ENCODE measurements at regions of chr12 and their contacts with region 1.

Region 1: GRCh38 chr12:63843721-63844390 is 644 bp upstream of the SRGAP1 start:
- DNase-seq: peak; percentile 87
- ATAC-seq: peak; percentile 93
- H3K4me3 ChIP-seq: peak overlapping the region; percentile 79 to 98 (median 91)
- H3K27ac ChIP-seq: peak overlapping the region; percentile 65
- H3K4me1 ChIP-seq: peaks cover 38% of the 10 kb centered on the region
- H3K27me3 ChIP-seq: no peaks in the 10 kb centered on the region; a peak in 1 of 5 replicates
- CTCF ChIP-seq: peak; percentile 97
- EP300 ChIP-seq: no peak
- POLR2A ChIP-seq: peak in 1 of 2 experiments; percentile 73; a peak in 2 of 4 replicates
- RAD21 ChIP-seq: peak; percentile 100

Region 2: DNA sequence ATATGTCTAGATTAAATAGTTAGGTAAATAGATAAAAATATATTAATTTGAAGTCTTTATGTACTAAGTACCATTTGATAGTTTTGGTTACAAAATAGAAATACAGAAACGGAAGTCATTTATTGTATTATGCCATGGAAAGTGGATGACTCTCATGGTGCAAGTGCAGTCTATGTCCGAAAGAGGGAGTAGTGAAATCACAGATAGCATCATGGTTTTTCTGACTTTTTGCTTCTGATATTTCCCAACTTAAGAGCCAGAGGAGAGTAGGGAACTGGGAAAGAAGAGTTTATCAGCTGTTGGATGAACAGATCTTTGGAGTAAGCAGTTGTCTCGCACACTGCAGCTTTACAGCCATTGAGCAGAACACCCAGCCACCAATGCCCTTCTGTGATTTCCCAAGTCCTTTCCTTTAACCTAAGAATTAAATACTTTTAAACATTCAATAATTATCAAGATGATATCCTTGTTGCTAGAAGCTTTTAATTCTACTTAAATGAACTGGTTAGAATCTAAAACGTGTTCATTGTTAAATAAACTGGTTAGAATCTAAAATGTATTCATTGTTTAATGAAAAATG is 17.8 kb before region 1 on chr12:
- CTCF ChIA-PET with region 1: no interaction called
- POLR2A ChIA-PET with region 1: no interaction called
- in situ Hi-C with region 1: no loop called
- intact Hi-C with region 1: no loop called
- DNase-seq: peak; percentile 56
- ATAC-seq: peak; percentile 79
- H3K4me3 ChIP-seq: no peak overlapping the region
- H3K27ac ChIP-seq: no peak overlapping the region
- H3K4me1 ChIP-seq: peaks cover 18% of the 10 kb centered on the region
- H3K27me3 ChIP-seq: no peaks in the 10 kb centered on the region
- CTCF ChIP-seq: peak; percentile 82
- EP300 ChIP-seq: no peak
- POLR2A ChIP-seq: no peak
- RAD21 ChIP-seq: peak; percentile 57; the same call in 1 of the 2 replicates

Region 3: GRCh38 chr12:63857771-63858670 is 14.2 kb after region 1 on chr12:
- CTCF ChIA-PET with region 1: no interaction called
- POLR2A ChIA-PET with region 1: no interaction called
- in situ Hi-C with region 1: no loop called
- intact Hi-C with region 1: no loop called
- DNase-seq: no peak
- ATAC-seq: no peak
- H3K4me3 ChIP-seq: no peak overlapping the region
- H3K27ac ChIP-seq: no peak overlapping the region
- H3K4me1 ChIP-seq: peaks cover 42% of the 10 kb centered on the region
- H3K27me3 ChIP-seq: no peaks in the 10 kb centered on the region
- CTCF ChIP-seq: no peak
- EP300 ChIP-seq: no peak
- POLR2A ChIP-seq: no peak
- RAD21 ChIP-seq: no peak

Region 4: DNA sequence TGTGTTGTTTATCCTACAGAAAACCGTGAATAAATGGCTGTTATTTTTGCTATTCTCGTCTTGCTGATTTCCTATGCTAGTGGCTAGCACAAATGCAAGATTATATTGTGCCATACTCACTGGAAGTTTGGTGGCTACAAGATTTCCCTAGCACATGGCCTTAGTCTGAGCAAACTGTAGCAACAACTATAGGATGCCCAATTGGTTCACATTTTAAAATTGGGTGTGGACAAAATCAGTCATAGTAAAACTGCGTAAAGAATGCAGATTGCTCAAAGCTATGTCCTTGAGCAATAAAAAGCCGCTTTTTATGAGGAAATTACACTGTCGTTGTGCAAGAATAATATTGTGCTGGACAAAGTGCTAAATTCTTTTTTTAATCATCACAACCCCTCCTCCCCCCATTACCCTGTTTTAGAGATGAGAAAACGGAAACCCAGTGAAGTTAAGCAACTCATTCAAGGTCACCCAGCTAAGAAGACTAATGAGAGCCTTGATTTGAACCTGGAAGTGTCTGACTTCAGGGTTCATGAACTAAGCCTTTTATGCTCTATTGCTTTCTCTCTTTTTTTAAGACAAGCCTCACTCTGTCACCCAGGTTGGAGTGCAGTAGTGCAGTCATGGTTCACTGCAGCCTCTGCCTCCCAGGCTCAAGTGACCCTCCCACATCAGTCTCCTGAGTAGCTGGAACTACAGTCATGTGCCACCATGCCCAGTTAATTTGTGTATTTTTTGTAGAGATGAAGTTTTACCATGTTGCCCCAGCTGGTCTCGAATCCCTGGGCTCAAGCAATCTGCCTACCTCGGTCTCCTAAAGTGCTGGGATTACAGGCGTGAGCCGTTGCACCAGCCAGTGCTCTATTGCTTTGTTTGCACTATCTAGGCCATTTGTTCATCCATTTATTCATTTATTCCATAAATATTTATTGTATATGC is 74.3 kb after region 1 on chr12:
- CTCF ChIA-PET with region 1: no interaction called
- POLR2A ChIA-PET with region 1: interaction called, 18 read pairs
- in situ Hi-C with region 1: no loop called
- intact Hi-C with region 1: loop called (anchors 1 kb)
- DNase-seq: peak; percentile 92
- ATAC-seq: peak; percentile 86
- H3K4me3 ChIP-seq: peak overlapping the region; percentile 46 to 58 (median 57); a peak in 5 of 6 replicates
- H3K27ac ChIP-seq: peak overlapping the region; percentile 70
- H3K4me1 ChIP-seq: peaks cover 59% of the 10 kb centered on the region
- H3K27me3 ChIP-seq: no peaks in the 10 kb centered on the region
- CTCF ChIP-seq: no peak
- EP300 ChIP-seq: peak; percentile 82 to 86
- POLR2A ChIP-seq: no peak
- RAD21 ChIP-seq: no peak

Region 5: GRCh38 chr12:64010069-64010699 is 166.3 kb after region 1 on chr12:
- CTCF ChIA-PET with region 1: no interaction called
- POLR2A ChIA-PET with region 1: no interaction called
- in situ Hi-C with region 1: no loop called
- intact Hi-C with region 1: loop called (anchors 10 kb)
- DNase-seq: peak; percentile 74
- ATAC-seq: peak; percentile 70
- H3K4me3 ChIP-seq: no peak overlapping the region
- H3K27ac ChIP-seq: peak overlapping the region; percentile 24
- H3K4me1 ChIP-seq: peaks cover 19% of the 10 kb centered on the region
- H3K27me3 ChIP-seq: no peaks in the 10 kb centered on the region
- CTCF ChIP-seq: no peak
- EP300 ChIP-seq: no peak
- POLR2A ChIP-seq: no peak
- RAD21 ChIP-seq: no peak

Region 6: GRCh38 chr12:64181504-64182291 is 337.8 kb after region 1 on chr12:
- CTCF ChIA-PET with region 1: interaction called, 11 read pairs
- POLR2A ChIA-PET with region 1: interaction called, 4 read pairs
- in situ Hi-C with region 1: loop called (anchors 5 kb)
- intact Hi-C with region 1: loop called (anchors 1 kb)
- DNase-seq: peak; percentile 32
- ATAC-seq: peak; percentile 92
- H3K4me3 ChIP-seq: no peak overlapping the region
- H3K27ac ChIP-seq: no peak overlapping the region
- H3K4me1 ChIP-seq: 0 out of 2 replicates have a peak, but pooled peaks cover 7% of the 10 kb centered on the region
- H3K27me3 ChIP-seq: no peaks in the 10 kb centered on the region
- CTCF ChIP-seq: peak; percentile 77
- EP300 ChIP-seq: no peak
- POLR2A ChIP-seq: no peak
- RAD21 ChIP-seq: peak; percentile 58; the same call in 1 of the 2 replicates

Region 7: GRCh38 chr12:64236549-64236948 is 392.7 kb after region 1 on chr12:
- CTCF ChIA-PET with region 1: no interaction called
- POLR2A ChIA-PET with region 1: no interaction called
- in situ Hi-C with region 1: no loop called
- intact Hi-C with region 1: loop called (anchors 5 kb)
- DNase-seq: no peak
- ATAC-seq: peak; percentile 85
- H3K4me3 ChIP-seq: no peak overlapping the region
- H3K27ac ChIP-seq: no peak overlapping the region
- H3K4me1 ChIP-seq: peaks cover 15% of the 10 kb centered on the region
- H3K27me3 ChIP-seq: peaks cover 0 to 2% of the 10 kb centered on the region in 2 experiments; a peak in 1 of 5 replicates
- CTCF ChIP-seq: peak; percentile 69
- EP300 ChIP-seq: no peak
- POLR2A ChIP-seq: no peak
- RAD21 ChIP-seq: no peak

Measured in HepG2 (cell line).